Adrenal gland (tissue), 19 donors: ENCODE measurements at regions of chr13 and their contacts with region 1.

Region 1: GRCh38 chr13:99656092-99656745 is 154.9 kb downstream of the TM9SF2 start:
- DNase-seq: peak; percentile 65 to 91 (median 83)
- H3K4me3 ChIP-seq: no peak overlapping the region
- H3K27ac ChIP-seq: no peak overlapping the region
- H3K4me1 ChIP-seq: no peaks in the 10 kb centered on the region
- H3K27me3 ChIP-seq: no peaks in the 10 kb centered on the region
- CTCF ChIP-seq: peak; percentile 80 to 93 (median 88)
- POLR2A ChIP-seq: no peak

Region 2: DNA sequence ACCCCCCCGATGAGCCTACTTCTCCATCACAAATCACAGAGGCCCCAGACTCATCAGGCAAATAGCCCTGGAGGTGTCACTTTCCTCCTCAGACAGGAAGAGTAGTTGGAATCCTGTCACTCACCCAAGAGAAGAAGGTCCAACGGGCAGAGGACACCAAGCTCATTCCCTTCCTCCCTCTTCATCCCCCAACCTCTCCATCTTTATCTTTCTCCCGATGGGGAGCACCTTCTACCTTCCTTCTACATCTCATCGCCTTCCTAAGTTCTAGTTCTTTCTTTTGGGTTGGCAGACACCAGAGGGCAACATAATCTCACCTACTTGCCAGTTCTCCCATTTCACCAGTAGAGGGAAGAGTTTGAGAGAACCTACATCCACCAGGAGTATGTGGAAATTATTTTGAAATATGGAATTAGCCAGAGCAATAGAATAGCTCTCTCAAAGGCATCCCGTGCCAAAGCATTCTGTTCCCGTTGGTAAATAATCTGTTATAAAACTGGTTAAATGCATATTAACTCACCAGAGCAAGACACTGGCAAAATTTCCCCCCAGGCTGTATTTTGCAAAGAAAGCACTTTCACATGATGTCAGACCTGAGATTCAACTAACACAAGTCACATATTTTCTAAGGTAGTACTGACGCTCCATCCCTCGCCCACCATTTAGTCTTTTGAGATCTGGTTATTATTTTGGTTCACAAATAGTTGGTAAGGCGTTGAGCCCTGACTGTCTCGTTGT is 260.3 kb after region 1 on chr13:
- intact Hi-C with region 1: loop called in 1 of 2 experiments (anchors 10 kb)
- DNase-seq: peak in 3 of 7 donors; percentile 13 to 27 (median 20)
- H3K4me3 ChIP-seq: no peak overlapping the region
- H3K27ac ChIP-seq: no peak overlapping the region
- H3K4me1 ChIP-seq: no peaks in the 10 kb centered on the region
- H3K27me3 ChIP-seq: peaks cover 16% of the 10 kb centered on the region
- CTCF ChIP-seq: peak; percentile 69 to 98 (median 86)
- POLR2A ChIP-seq: no peak

Region 3: DNA sequence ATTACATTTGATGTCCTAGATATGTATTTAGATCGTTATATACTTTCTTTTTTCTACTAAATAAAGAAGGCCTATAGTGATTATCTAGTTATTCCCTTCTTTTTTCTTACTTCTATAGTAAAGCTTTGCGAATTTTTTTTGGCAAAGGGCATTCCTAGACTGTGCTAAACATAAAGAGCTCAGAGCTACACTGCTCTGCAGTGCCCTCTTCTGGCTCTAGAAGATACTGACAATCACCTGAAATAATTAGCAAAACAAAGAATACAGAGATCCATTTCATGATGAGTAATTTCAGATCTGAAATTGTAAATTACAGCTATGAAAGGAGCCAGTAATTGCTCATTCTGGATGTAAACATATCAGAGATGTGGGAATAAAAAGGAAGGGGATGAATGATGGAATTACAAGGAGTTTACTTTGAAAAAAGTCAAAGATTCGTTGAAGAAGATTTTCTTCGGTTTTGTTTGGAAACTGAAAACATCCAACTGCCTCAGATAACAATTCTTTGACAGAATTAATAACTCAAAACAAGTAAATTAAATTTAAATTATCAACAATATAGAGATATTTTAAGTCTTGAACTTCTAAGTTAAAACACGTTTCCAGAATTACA is 1471.6 kb after region 1 on chr13:
- intact Hi-C with region 1: loop called in 1 of 2 experiments (anchors 10 kb)
- DNase-seq: peak in 4 of 7 donors; percentile 13 to 35 (median 23)
- H3K4me3 ChIP-seq: no peak overlapping the region
- H3K27ac ChIP-seq: no peak overlapping the region
- H3K4me1 ChIP-seq: no peaks in the 10 kb centered on the region
- H3K27me3 ChIP-seq: no peaks in the 10 kb centered on the region
- CTCF ChIP-seq: peak; percentile 34 to 79 (median 56)
- POLR2A ChIP-seq: no peak